Activated CD4-positive, alpha-beta T cell treated with anti-CD3 and anti-CD28 coated beads for 36 hours (primary cell): ENCODE measurements at regions of chr6 and their contacts with region 1.

Region 1: DNA sequence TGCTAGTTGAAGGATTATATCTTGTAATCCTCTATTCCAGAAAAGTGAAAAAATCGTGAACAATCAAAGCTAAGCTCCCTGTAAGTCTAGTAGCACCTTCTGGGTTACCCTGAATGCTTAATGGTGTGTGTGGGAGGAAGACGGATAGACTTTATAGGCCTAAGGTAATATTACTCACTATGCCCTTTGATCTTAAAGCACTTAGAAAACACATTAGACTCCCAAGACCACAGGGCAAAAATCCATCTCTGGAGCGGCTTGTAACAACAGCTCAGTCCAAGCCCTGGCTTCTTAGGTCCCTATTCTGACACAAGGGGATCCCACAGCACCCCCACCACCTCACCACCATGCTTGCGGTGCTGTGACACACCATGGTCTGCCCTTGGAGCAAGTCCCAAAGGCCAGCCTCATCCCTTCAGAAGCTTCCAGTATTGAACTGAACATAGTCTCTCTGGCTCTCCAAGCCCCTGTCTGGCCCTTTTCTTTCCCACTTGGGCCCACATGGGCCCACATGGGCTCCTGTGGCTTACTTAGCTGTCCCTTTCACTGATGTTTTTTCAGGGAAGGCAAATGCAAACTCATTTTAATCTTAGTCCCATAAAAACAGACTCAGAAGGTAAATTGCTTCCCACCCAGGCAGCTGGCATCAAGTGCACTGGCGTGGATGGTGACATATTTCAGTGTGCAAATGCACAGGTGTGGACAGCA is 28.3 kb downstream of the C6orf132 start:
- DNase-seq: no peak
- ATAC-seq: peak; percentile 63
- H3K4me3 Mint-ChIP-seq: no peak overlapping the region
- H3K27ac Mint-ChIP-seq: no peak overlapping the region
- H3K4me1 Mint-ChIP-seq: no peaks in the 10 kb centered on the region
- H3K27me3 Mint-ChIP-seq: peaks cover 6% of the 10 kb centered on the region

Region 2: DNA sequence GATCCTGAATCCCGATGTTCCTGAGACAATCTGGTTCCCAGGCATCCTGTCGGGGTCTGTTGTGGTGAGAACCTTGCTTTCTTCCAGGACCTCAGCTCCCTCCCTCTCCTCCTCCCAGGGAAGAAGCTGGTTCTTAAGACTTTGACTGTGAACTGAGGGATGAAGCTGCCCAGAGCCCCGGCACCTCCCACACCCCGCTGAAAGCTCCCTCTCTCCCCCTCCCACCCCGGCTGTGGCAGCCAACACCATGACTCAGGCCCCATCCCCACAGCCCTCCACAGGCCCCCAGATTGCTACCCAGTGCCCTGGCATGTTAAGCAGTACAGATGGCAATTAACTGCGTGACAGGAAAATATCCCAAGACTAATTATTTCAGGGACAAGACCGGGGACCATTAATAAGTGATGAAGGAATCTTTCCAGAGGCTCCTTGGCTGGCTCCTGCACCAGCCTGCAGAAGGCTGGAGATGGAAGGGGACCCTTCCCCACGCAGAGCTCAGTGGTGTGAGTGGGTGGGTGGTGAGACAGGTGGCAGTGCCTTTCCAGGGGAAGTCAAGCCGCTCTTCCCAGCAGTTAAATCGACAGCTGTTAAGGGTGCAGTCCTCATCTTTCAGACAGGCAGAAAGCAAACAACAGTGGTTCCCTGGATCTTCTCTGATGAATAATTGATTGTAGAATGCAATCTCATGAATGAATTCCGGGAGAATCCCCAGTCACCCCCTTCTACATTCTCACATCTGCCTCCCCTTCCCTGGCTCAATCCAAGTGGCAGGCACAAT is 1764.8 kb before region 1 on chr6:
- CTCF ChIA-PET with region 1: no interaction called
- POLR2A ChIA-PET with region 1: no interaction called
- intact Hi-C with region 1: no loop called
- DNase-seq: no peak
- ATAC-seq: no peak
- H3K4me3 Mint-ChIP-seq: no peak overlapping the region
- H3K27ac Mint-ChIP-seq: no peak overlapping the region
- H3K4me1 Mint-ChIP-seq: no peaks in the 10 kb centered on the region
- H3K27me3 Mint-ChIP-seq: no peaks in the 10 kb centered on the region

Region 3: DNA sequence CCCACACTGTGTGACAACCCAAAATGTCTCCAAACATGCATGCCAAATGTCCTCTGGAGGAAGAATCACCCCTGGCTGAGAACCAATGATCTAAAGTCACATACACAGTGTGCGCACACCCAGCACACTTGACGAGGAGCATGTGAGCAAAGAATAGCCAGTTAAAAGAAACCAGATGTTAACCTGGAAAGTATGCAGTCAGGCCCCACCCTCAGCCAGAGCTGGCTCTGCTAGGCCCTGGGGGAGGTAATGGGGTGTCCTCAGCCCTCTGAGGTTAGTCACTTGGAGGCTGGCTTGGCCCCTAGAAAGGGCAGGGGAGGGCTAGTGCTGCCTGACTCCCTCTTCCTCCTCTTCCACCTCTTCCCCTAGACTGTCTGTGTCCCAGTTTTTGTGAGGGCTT is 43.9 kb after region 1 on chr6:
- CTCF ChIA-PET with region 1: interaction called, 4 read pairs
- POLR2A ChIA-PET with region 1: no interaction called
- intact Hi-C with region 1: loop called in 1 of 2 experiments (anchors 5 kb)
- DNase-seq: no peak
- ATAC-seq: no peak
- H3K4me3 Mint-ChIP-seq: no peak overlapping the region
- H3K27ac Mint-ChIP-seq: no peak overlapping the region
- H3K4me1 Mint-ChIP-seq: no peaks in the 10 kb centered on the region
- H3K27me3 Mint-ChIP-seq: peaks cover 5% of the 10 kb centered on the region